Colonic mucosa (tissue), 4 donors: ENCODE measurements at regions of chr22 and their contacts with region 1.

Region 1: DNA sequence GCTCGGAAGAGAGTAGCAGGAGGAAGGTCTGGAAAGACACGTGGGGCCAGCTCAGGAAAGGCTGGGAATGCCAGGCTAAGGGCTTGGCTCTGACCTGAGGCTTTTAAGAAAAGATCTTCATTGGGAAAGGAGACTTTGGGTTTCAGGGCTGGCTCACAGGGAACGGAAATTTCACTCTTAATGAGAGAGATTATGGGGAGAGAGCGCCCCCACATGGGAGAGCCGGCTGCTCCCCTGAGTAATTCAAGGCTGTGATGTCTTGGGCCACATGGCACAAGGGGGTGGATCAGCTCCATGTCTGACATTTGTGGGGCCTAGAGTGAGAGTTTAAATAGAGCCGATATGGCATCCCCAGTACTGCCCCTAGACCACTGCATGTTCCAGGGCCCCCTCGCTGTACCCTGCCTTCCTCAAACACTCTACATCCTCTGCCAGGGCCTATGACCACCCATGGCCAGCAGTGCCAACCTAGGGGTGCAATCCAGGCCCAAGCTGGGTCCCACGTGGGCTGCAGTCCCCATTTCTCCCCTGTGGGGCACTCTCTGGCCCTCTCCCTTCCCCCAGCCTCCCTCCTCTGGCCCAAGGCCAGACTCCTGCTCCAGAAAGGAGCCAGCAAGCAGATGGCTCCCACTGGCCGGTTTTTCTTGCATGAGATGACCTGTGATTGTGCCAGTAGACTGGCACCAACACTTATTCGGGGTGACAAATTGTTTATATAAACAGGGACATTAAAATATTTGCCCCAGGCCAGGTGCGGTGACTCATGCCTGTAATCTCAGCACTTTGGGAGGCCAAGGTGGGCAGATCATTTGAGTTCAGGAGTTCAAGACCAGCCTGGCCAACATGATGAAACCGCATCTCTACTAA is 75.2 kb downstream of the ISX start:
- DNase-seq: peak; percentile 82
- H3K4me3 ChIP-seq: no peak overlapping the region
- H3K27ac ChIP-seq: no peak overlapping the region
- H3K4me1 ChIP-seq: no peaks in the 10 kb centered on the region
- H3K27me3 ChIP-seq: no peaks in the 10 kb centered on the region
- CTCF ChIP-seq: peak; percentile 63

Region 2: DNA sequence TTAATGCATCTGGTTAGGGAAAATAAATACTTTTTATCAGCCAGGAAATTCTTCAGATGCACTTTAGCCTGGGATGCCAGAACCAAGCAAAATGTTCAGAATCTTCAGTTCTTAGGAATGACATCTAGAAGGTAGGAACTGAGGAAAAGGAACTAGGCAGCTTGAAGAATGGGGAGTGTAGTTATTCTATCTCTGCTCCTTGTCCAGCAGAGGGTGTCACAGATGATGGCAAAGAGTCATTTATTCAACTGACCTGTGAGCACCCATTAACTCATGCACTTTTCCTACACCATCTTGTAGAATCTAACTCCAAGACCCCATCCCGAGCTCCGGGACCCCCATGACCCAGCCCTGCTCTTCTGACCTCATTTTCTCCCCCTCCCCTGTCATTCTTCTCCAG is 197.3 kb before region 1 on chr22:
- intact Hi-C with region 1: loop called (anchors 10 kb)
- DNase-seq: no peak
- H3K4me3 ChIP-seq: no peak overlapping the region
- H3K27ac ChIP-seq: no peak overlapping the region
- H3K4me1 ChIP-seq: no peaks in the 10 kb centered on the region
- H3K27me3 ChIP-seq: no peaks in the 10 kb centered on the region
- CTCF ChIP-seq: no peak

Region 3: GRCh38 chr22:35043252-35043931 is 97.7 kb before region 1 on chr22:
- intact Hi-C with region 1: loop called (anchors 5 kb)
- DNase-seq: no peak
- H3K4me3 ChIP-seq: no peak overlapping the region
- H3K27ac ChIP-seq: no peak overlapping the region
- H3K4me1 ChIP-seq: no peaks in the 10 kb centered on the region
- H3K27me3 ChIP-seq: no peaks in the 10 kb centered on the region
- CTCF ChIP-seq: peak; percentile 42

Region 4: GRCh38 chr22:35183917-35184316 is 42.8 kb after region 1 on chr22:
- intact Hi-C with region 1: no loop called
- DNase-seq: no peak
- H3K4me3 ChIP-seq: no peak overlapping the region
- H3K27ac ChIP-seq: no peak overlapping the region
- H3K4me1 ChIP-seq: no peaks in the 10 kb centered on the region
- H3K27me3 ChIP-seq: no peaks in the 10 kb centered on the region
- CTCF ChIP-seq: no peak